Endothelial cell of umbilical vein (primary cell): ENCODE measurements at regions of chr13 and their contacts with region 1.

Region 1: DNA sequence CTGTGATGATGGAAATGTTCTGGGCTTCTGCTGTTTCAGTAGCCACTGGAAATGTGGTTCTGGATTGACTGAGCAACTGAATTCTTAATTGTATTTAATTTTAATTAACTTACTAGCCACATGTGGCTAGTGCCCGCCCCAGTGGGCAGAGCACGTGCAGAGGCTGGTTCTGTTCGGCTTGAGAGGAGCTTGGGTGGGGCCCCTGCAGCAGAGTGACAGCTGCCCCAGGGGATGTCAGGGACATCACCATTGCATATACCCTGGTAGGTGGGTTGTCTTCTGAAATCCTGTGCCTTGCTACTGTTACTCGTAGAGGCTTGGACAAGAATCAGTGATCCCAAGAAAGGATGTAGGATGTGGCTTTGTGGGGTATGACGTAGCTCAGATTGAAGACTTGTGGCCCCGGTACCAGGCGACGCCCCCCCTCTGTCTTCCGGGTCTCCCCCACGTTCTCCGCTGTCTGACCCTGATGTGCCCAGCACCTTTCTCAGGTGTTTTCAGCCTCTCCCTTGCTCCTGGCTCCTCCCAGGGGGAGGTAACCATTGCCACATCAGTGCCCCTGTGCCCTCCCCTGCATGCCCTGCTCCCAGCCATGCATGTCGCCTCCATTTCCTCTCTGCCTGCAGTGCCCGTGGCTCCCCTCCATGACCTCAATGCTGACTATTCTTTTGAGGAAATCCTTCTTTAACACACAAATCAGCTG is 102.6 kb upstream of the RNF113B start:
- DNase-seq: peak; percentile 12
- H3K4me3 ChIP-seq: no peak overlapping the region
- H3K27ac ChIP-seq: no peak overlapping the region
- H3K4me1 ChIP-seq: no peaks in the 10 kb centered on the region
- H3K27me3 ChIP-seq: no peaks in the 10 kb centered on the region
- CTCF ChIP-seq: no peak
- POLR2A ChIP-seq: no peak

Region 2: DNA sequence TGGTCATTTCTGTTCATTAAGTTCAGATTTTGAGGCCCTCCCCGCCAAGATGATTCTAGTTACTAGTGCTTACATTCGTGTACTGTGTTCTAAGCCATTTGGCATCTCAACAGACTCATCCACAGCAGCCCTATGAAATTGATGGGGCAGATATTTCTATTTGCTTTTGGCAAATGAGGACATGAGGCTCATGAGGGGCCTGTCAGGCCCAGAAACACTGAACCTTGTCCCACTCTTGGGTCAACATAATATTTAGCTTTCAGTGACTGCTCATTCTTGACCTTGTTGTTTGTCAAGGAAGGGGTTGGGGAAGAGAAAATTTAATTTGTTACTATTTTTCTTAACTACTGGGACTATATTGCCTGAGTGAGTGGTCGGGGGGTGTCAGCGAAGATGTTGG is 10.2 kb before region 1 on chr13:
- CTCF ChIA-PET with region 1: interaction called, 10 read pairs
- POLR2A ChIA-PET with region 1: interaction called, 3 read pairs
- dilution Hi-C with region 1: no loop called
- intact Hi-C with region 1: no loop called
- DNase-seq: no peak
- H3K4me3 ChIP-seq: no peak overlapping the region
- H3K27ac ChIP-seq: no peak overlapping the region
- H3K4me1 ChIP-seq: peaks cover 6% of the 10 kb centered on the region
- H3K27me3 ChIP-seq: no peaks in the 10 kb centered on the region
- CTCF ChIP-seq: no peak
- POLR2A ChIP-seq: no peak

Region 3: GRCh38 chr13:98333486-98333885 is 53.9 kb after region 1 on chr13:
- CTCF ChIA-PET with region 1: no interaction called
- POLR2A ChIA-PET with region 1: no interaction called
- dilution Hi-C with region 1: no loop called
- intact Hi-C with region 1: no loop called
- DNase-seq: no peak
- H3K4me3 ChIP-seq: no peak overlapping the region
- H3K27ac ChIP-seq: no peak overlapping the region
- H3K4me1 ChIP-seq: no peaks in the 10 kb centered on the region
- H3K27me3 ChIP-seq: no peaks in the 10 kb centered on the region
- CTCF ChIP-seq: no peak
- POLR2A ChIP-seq: no peak